K562 (cell line): ENCODE measurements at regions of chr4 and their contacts with region 1.

Region 1: GRCh38 chr4:129994715-129995114 is 898.8 kb downstream of the C4orf33 start:
- DNase-seq: no peak
- ATAC-seq: no peak
- H3K4me3 ChIP-seq: no peak overlapping the region
- H3K27ac ChIP-seq: no peak overlapping the region
- H3K4me1 ChIP-seq: no peaks in the 10 kb centered on the region
- H3K27me3 ChIP-seq: no peaks in the 10 kb centered on the region
- CTCF ChIP-seq: no peak
- EP300 ChIP-seq: no peak
- POLR2A ChIP-seq: no peak
- RAD21 ChIP-seq: no peak

Region 2: GRCh38 chr4:130035391-130035790 is 40.7 kb after region 1 on chr4:
- CTCF ChIA-PET with region 1: no interaction called
- POLR2A ChIA-PET with region 1: no interaction called
- in situ Hi-C with region 1: no loop called
- intact Hi-C with region 1: loop called (anchors 2 kb)
- DNase-seq: no peak
- ATAC-seq: no peak
- H3K4me3 ChIP-seq: no peak overlapping the region
- H3K27ac ChIP-seq: no peak overlapping the region
- H3K4me1 ChIP-seq: no peaks in the 10 kb centered on the region
- H3K27me3 ChIP-seq: no peaks in the 10 kb centered on the region
- CTCF ChIP-seq: no peak
- EP300 ChIP-seq: no peak
- POLR2A ChIP-seq: no peak
- RAD21 ChIP-seq: no peak

Region 3: DNA sequence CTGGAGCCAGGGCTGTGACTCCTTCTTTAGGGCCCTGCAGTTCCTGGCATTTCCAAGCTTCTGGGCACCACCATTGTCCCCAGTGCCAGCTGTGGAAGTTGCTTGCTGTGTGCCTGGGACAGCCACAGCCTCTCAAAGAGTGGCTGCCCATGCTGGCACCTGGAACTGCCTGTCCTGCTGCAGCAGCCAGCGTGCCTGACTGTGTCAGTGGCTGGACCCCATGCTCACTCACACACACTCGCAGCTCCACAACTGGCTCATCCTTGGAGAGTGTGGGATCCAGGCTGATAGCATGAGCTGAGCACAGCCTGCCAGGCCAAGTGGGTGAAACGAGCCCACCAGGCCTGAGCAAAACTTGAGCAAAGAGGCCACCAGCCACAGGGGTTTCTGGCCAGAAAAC is 208.9 kb after region 1 on chr4:
- CTCF ChIA-PET with region 1: no interaction called
- POLR2A ChIA-PET with region 1: no interaction called
- in situ Hi-C with region 1: no loop called
- intact Hi-C with region 1: no loop called
- DNase-seq: no peak
- ATAC-seq: no peak
- H3K4me3 ChIP-seq: no peak overlapping the region
- H3K27ac ChIP-seq: no peak overlapping the region
- H3K4me1 ChIP-seq: no peaks in the 10 kb centered on the region
- H3K27me3 ChIP-seq: no peaks in the 10 kb centered on the region
- CTCF ChIP-seq: no peak
- EP300 ChIP-seq: no peak
- POLR2A ChIP-seq: no peak
- RAD21 ChIP-seq: no peak

Region 4: GRCh38 chr4:130322439-130322838 is 327.7 kb after region 1 on chr4:
- CTCF ChIA-PET with region 1: no interaction called
- POLR2A ChIA-PET with region 1: no interaction called
- in situ Hi-C with region 1: no loop called
- intact Hi-C with region 1: no loop called
- DNase-seq: no peak
- ATAC-seq: no peak
- H3K4me3 ChIP-seq: no peak overlapping the region
- H3K27ac ChIP-seq: no peak overlapping the region
- H3K4me1 ChIP-seq: no peaks in the 10 kb centered on the region
- H3K27me3 ChIP-seq: no peaks in the 10 kb centered on the region
- CTCF ChIP-seq: no peak
- EP300 ChIP-seq: no peak
- POLR2A ChIP-seq: no peak
- RAD21 ChIP-seq: no peak